Common myeloid progenitor, CD34-positive (primary cell): ENCODE measurements at regions of chr17 and their contacts with region 1.

Region 1: DNA sequence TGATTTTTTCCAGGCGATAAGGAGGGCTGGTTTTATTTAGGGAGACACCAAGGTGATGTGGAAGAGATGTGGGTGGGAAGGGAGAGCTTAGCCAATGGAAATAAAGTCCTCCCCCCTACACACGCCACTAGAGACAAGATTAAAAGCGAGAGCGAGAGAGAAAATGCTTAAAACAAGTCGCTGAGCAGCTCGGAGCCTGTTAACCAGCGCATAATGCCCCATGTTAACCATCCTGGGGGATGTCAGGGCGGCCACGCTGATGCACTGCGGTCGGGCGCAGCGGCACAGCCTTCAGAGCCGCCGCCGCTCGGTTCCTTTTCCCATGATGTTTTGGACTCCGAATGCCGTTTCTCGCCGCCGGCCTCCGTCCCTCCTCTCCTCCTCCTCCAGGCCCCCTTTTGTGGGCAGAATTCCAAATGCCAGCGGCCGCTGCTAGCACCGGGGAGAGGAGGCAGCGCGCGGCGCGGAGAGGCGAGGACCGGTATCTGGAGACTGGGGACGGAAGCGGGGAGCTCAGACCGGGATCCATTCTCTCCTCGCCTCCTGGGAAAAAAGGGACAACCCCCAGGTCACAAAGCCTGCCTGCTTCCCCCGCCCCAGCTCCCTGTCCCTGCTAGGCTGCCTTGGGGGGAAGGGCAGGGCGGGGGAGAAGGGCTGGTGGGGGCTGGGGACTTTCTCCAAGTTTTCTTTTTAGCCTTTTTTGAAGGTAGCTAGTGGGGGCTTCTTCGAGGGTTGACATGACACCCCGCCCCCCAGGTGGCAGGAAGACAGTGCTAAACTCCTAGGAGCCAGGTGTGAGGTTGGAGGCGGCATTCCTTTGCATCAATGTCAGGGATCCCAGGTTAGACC is 98.1 kb upstream of the CCL2 start:
- DNase-seq: peak in 2 of 3 donors; percentile 55 to 65
- H3K4me3 ChIP-seq: peak overlapping the region in 5 of 7 experiments; percentile 1 to 67 (median 56)
- H3K27ac ChIP-seq: no peak overlapping the region
- H3K4me1 ChIP-seq: peaks cover 0 to 46% (median 27%) of the 10 kb centered on the region in 4 experiments
- H3K27me3 ChIP-seq: peaks cover 5 to 39% (median 11%) of the 10 kb centered on the region in 5 experiments

Region 2: DNA sequence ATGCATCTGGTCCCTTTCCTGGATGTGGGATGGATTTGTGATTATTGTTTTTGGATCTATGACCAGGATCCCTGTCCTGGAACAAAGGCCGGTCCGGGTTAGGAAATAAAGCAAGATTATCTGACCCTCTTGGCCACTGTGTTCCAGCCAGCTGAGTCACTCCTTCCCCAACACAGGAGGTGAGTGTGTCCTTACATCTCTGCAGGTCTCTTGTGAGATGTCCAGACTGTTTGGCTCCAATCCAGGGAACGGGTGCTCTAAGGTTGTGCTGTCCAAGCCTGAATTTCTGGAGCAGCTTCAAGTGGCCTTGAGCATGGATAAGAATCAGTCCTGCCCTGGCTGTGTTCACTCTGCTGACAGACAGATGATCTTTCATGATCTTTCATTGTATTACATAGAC is 38.4 kb before region 1 on chr17:
- CTCF ChIA-PET with region 1: no interaction called
- POLR2A ChIA-PET with region 1: no interaction called
- DNase-seq: no peak
- H3K4me3 ChIP-seq: no peak overlapping the region
- H3K27ac ChIP-seq: no peak overlapping the region
- H3K4me1 ChIP-seq: no peaks in the 10 kb centered on the region
- H3K27me3 ChIP-seq: peaks cover 0 to 11% (median 0%) of the 10 kb centered on the region in 5 experiments

Region 3: DNA sequence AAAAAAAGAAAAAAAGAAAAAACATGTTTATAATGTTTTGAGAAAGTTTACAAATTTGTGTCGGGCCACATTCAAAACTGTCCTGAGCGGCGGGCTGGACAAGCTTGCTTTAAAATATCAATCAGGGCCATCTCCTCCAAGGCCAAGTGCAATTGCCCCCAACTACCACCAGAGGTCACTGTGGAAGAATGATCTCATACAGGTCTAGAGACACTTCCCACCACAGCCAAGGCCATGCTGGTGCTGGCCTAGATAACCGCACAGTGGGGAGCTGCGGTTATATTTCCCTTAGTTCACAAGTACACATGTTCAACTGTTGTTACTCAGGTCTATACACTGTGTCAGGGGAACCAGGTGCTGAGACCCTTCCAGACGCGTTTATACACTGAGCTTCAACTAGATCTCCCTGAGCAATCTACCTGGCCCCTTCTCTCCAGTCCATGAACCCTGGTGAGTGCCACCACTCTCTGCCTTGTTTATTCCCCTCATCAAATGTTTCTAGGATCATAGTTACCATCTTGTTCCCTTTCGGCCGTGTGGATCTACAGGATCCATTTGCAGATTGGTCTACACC is 14.4 kb after region 1 on chr17:
- CTCF ChIA-PET with region 1: interaction called, 52 read pairs
- POLR2A ChIA-PET with region 1: interaction called, 3 read pairs
- DNase-seq: peak; percentile 88 to 96 (median 96)
- H3K4me3 ChIP-seq: no peak overlapping the region
- H3K27ac ChIP-seq: no peak overlapping the region
- H3K4me1 ChIP-seq: peaks cover 0 to 22% (median 12%) of the 10 kb centered on the region in 4 experiments
- H3K27me3 ChIP-seq: no peaks in the 10 kb centered on the region